ENCODE measurements at regions of chr1 and their contacts with region 1.

Region 1: DNA sequence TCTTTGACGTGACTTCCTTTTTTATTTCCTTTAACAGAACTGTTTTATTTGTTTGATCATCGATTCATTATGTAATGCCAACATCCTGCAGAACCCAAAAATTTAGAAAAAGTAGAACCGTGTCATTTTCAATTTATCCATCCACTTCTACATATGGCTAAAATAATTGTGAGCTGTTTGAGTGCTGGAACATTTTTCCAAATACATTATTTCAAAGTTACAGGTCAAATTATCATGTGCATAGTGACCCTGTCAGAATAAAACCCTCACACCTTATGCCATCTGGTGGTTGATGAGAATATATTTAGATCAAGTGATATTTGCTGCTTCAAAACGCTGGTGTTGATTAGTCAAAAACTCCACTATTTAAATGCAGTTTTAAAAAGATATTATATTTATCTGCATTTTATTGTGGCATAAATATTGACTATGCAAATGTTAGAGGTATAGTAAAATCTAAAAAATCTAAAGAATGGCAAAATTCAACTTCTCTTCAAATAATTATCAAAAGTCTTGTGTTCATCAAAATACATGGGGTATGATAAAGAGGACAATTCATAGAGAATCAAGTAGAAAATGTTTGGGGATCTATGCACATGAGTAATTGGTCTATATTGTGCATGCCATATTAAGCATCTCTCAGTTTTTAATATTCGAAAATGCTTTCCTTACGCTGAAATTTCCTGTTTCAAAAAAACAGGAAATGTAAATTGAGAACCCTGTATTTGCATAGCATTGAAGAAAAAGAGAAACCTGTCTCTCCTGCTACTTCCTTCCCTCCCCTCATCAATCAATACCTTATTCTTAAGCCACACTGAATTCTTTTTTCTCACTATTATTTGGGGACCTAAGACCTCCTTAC is 39.7 kb downstream of the UBE2U start:
- DNase-seq: no peak
- ATAC-seq: no peak
- H3K4me3 Mint-ChIP-seq: peak overlapping the region; percentile 50
- H3K27ac Mint-ChIP-seq: no peak overlapping the region
- H3K4me1 Mint-ChIP-seq: peaks cover 15% of the 10 kb centered on the region
- H3K27me3 Mint-ChIP-seq: peaks cover 20% of the 10 kb centered on the region
- CTCF ChIP-seq: no peak

Region 2: GRCh38 chr1:63557365-63557987 is 685.6 kb before region 1 on chr1:
- CTCF ChIA-PET with region 1: interaction called, 4 read pairs
- POLR2A ChIA-PET with region 1: no interaction called
- intact Hi-C with region 1: loop called (anchors 5 kb)
- DNase-seq: no peak
- ATAC-seq: no peak
- H3K4me3 Mint-ChIP-seq: no peak overlapping the region
- H3K27ac Mint-ChIP-seq: no peak overlapping the region
- H3K4me1 Mint-ChIP-seq: no peaks in the 10 kb centered on the region
- H3K27me3 Mint-ChIP-seq: no peaks in the 10 kb centered on the region
- CTCF ChIP-seq: no peak

Region 3: DNA sequence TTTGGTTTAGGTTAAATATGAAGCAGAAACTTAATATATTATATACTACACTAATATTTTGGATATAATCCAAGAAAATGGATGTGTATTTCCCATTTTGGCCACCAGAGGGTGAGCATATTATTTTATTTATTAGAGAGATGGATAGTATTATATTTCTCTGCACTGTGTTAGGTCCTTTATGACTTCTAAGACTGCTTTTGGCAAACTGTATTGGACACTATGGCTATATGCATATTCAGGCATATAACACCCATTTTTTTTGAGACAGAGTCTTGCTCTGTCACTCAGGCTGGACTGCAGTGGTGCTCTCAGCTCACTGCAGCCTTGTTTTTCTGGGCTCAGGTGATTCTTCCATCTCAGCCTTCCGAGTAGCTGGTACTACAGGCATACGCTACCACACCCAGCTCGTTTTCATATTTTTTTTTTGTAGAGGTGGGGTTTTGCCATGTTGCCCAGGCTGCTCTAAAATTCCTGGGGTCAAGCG is 667.7 kb before region 1 on chr1:
- CTCF ChIA-PET with region 1: interaction called, 13 read pairs
- POLR2A ChIA-PET with region 1: no interaction called
- intact Hi-C with region 1: loop called (anchors 1 kb)
- DNase-seq: no peak
- ATAC-seq: no peak
- H3K4me3 Mint-ChIP-seq: no peak overlapping the region
- H3K27ac Mint-ChIP-seq: no peak overlapping the region
- H3K4me1 Mint-ChIP-seq: no peaks in the 10 kb centered on the region
- H3K27me3 Mint-ChIP-seq: no peaks in the 10 kb centered on the region
- CTCF ChIP-seq: peak; percentile 67

Region 4: GRCh38 chr1:63691701-63692425 is 551.3 kb before region 1 on chr1:
- CTCF ChIA-PET with region 1: interaction called, 16 read pairs
- POLR2A ChIA-PET with region 1: interaction called, 3 read pairs
- intact Hi-C with region 1: loop called (anchors 1 kb)
- DNase-seq: no peak
- ATAC-seq: peak; percentile 57
- H3K4me3 Mint-ChIP-seq: no peak overlapping the region
- H3K27ac Mint-ChIP-seq: no peak overlapping the region
- H3K4me1 Mint-ChIP-seq: no peaks in the 10 kb centered on the region
- H3K27me3 Mint-ChIP-seq: peaks cover 8% of the 10 kb centered on the region
- CTCF ChIP-seq: no peak

Region 5: GRCh38 chr1:63773815-63774616 is 469.1 kb before region 1 on chr1 and contains the start of gene ROR1:
- CTCF ChIA-PET with region 1: no interaction called
- POLR2A ChIA-PET with region 1: no interaction called
- intact Hi-C with region 1: loop called (anchors 5 kb)
- DNase-seq: peak; percentile 53
- ATAC-seq: peak; percentile 96
- H3K4me3 Mint-ChIP-seq: peak within 1 kb of the TSS; percentile 85
- H3K27ac Mint-ChIP-seq: no peak within 1 kb of the TSS
- H3K4me1 Mint-ChIP-seq: peaks cover 22% of the 10 kb centered on the region
- H3K27me3 Mint-ChIP-seq: peaks cover 40% of the 10 kb centered on the region
- CTCF ChIP-seq: no peak
- total RNA-seq, gene ROR1: 1.8 and 2.2 TPM in 2 replicates

Region 6: GRCh38 chr1:64136752-64137411 is 106.2 kb before region 1 on chr1:
- CTCF ChIA-PET with region 1: interaction called, 5 read pairs
- POLR2A ChIA-PET with region 1: no interaction called
- intact Hi-C with region 1: loop called (anchors 5 kb)
- DNase-seq: peak; percentile 39
- ATAC-seq: peak; percentile 73
- H3K4me3 Mint-ChIP-seq: no peak overlapping the region
- H3K27ac Mint-ChIP-seq: no peak overlapping the region
- H3K4me1 Mint-ChIP-seq: no peaks in the 10 kb centered on the region
- H3K27me3 Mint-ChIP-seq: peaks cover 5% of the 10 kb centered on the region
- CTCF ChIP-seq: peak; percentile 34

Measured in activated B cell treated with CpG ODN at 0.5 μM for 24 hours (primary cell).